Activated CD4-positive, alpha-beta T cell treated with anti-CD3 and anti-CD28 coated beads, Interleukin-2, amount 10 ng/mL, durations not matched to agents 7 days and 5 days (primary cell): ENCODE measurements at regions of chr5 and their contacts with region 1.

Region 1: DNA sequence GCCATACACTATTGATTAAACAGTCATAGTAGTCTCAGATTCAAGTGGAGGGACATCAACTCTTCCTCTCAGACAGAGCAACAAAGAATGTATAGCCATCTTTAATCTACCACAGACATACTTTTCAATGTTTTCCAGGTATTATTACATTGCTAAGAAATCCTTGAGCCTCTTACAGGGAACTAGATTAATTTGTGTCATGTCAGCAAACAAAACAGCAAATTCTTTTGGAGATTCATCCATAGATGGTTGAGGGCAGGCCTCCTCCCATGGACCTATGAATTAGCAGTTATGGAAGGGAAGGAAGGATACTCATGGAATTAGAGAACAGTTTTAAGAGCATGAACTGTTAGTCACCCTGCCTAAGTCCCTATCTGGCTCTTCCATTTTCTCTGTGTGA is 47.8 kb upstream of the ARRDC3 start:
- DNase-seq: no peak
- H3K4me3 Mint-ChIP-seq: no peak overlapping the region
- H3K27ac Mint-ChIP-seq: no peak overlapping the region
- H3K4me1 Mint-ChIP-seq: peaks cover 17% of the 10 kb centered on the region
- H3K27me3 Mint-ChIP-seq: no peaks in the 10 kb centered on the region

Region 2: GRCh38 chr5:91397791-91398190 is 33.2 kb before region 1 on chr5:
- CTCF ChIA-PET with region 1: no interaction called
- POLR2A ChIA-PET with region 1: no interaction called
- DNase-seq: no peak
- H3K4me3 Mint-ChIP-seq: no peak overlapping the region
- H3K27ac Mint-ChIP-seq: peak overlapping the region; percentile 65
- H3K4me1 Mint-ChIP-seq: peaks cover 12% of the 10 kb centered on the region
- H3K27me3 Mint-ChIP-seq: no peaks in the 10 kb centered on the region

Region 3: GRCh38 chr5:91419571-91420537 is 11.1 kb before region 1 on chr5:
- CTCF ChIA-PET with region 1: interaction called, 10 read pairs
- POLR2A ChIA-PET with region 1: no interaction called
- DNase-seq: peak; percentile 76
- H3K4me3 Mint-ChIP-seq: no peak overlapping the region
- H3K27ac Mint-ChIP-seq: no peak overlapping the region
- H3K4me1 Mint-ChIP-seq: peaks cover 3% of the 10 kb centered on the region
- H3K27me3 Mint-ChIP-seq: peaks cover 2% of the 10 kb centered on the region

Region 4: DNA sequence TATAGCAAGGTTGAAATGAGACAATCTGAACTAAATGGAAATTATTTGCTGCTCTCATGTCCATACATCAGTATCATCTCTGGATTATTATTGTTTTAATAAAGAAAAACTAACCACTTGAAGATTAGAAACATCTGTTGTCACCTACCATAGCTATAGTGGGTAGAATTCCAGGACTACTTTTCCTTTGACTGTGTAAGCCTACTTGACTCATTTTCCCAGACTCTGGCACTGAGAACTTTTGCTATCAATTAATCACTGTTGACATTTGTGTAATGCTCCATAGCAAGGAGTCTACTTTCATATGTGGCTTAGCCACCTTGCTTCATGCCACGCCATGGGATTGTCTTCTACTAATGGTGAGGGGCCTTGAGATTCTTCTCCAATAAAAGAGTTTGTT is 12.1 kb after region 1 on chr5:
- CTCF ChIA-PET with region 1: no interaction called
- POLR2A ChIA-PET with region 1: no interaction called
- DNase-seq: no peak
- H3K4me3 Mint-ChIP-seq: no peak overlapping the region
- H3K27ac Mint-ChIP-seq: no peak overlapping the region
- H3K4me1 Mint-ChIP-seq: no peaks in the 10 kb centered on the region
- H3K27me3 Mint-ChIP-seq: no peaks in the 10 kb centered on the region

Region 5: DNA sequence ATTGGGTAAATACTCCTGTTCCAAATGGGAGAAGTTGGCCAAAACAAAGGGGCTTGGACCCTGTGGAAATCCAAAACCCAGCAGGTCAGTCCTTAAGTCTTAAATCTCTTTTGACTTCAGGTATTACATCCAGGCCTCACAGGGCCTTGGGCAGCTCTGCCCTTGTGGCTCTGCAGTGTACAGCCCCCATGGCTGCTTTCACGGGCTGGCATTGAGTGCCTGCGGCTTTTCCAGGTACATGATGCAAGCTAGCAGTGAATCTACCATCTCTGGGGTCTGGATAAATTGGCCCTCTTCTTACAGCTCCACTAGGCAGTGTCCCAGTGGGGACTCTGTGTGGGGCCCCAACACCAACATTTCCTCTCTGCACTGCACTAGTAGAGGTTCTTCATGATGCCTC is 260.6 kb after region 1 on chr5:
- CTCF ChIA-PET with region 1: no interaction called
- POLR2A ChIA-PET with region 1: no interaction called
- DNase-seq: no peak
- H3K4me3 Mint-ChIP-seq: no peak overlapping the region
- H3K27ac Mint-ChIP-seq: no peak overlapping the region
- H3K4me1 Mint-ChIP-seq: no peaks in the 10 kb centered on the region
- H3K27me3 Mint-ChIP-seq: no peaks in the 10 kb centered on the region